BJ (cell line): ENCODE measurements at regions of chr19 and their contacts with region 1.

Region 1: GRCh38 chr19:55146078-55146704 is 2.8 kb downstream of the TNNT1 start:
- DNase-seq: no peak
- H3K4me3 ChIP-seq: peak overlapping the region; percentile 48
- H3K27me3 ChIP-seq: peaks cover 6% of the 10 kb centered on the region
- CTCF ChIP-seq: peak; percentile 89

Region 2: DNA sequence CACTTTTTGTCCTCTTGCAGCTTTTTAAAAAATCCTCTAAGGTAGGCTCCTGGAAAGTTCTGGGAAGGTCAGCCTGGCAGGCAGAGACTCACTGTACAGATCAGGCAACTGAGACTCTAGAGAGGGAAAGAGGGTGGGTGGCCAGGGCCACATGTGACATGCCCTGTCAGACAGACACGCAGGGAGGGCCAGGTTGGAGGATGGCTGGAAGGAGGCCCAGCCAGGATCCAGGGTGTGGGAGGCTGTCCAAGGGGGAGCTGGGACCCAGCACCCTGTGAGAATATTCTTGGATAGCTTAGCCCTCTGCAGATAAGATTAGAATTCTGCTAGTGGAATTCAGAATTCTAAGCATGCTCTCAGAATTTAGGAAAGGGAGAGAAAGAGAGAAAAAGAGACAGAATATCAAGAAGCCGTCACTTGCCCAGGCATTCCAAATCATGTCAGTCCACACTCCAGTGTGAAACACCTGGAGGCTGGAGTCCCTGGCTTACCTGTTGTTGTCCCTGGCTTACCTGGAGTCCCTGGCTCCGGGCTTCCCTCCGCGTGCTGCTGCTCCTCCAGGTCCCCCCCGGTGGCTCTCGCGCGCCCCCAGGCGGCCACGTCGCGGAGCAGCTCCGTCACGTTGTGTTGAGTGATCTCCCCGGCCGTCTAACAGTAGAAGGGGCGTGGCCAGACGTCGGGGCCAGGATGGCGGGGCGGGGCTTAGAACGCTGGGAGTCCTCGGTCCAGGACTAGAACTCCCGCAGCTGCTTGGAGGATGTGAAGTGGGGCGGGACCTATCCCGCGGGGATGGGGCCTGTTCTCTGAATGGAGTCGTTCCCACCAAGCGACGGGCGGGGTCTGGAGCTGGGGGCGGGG is 14.2 kb after region 1 on chr19:
- CTCF ChIA-PET with region 1: interaction called, 43 read pairs
- POLR2A ChIA-PET with region 1: no interaction called
- DNase-seq: no peak
- H3K4me3 ChIP-seq: no peak overlapping the region
- H3K27me3 ChIP-seq: peaks cover 7% of the 10 kb centered on the region; the same call in 1 of the 2 replicates
- CTCF ChIP-seq: peak; percentile 98

Region 3: DNA sequence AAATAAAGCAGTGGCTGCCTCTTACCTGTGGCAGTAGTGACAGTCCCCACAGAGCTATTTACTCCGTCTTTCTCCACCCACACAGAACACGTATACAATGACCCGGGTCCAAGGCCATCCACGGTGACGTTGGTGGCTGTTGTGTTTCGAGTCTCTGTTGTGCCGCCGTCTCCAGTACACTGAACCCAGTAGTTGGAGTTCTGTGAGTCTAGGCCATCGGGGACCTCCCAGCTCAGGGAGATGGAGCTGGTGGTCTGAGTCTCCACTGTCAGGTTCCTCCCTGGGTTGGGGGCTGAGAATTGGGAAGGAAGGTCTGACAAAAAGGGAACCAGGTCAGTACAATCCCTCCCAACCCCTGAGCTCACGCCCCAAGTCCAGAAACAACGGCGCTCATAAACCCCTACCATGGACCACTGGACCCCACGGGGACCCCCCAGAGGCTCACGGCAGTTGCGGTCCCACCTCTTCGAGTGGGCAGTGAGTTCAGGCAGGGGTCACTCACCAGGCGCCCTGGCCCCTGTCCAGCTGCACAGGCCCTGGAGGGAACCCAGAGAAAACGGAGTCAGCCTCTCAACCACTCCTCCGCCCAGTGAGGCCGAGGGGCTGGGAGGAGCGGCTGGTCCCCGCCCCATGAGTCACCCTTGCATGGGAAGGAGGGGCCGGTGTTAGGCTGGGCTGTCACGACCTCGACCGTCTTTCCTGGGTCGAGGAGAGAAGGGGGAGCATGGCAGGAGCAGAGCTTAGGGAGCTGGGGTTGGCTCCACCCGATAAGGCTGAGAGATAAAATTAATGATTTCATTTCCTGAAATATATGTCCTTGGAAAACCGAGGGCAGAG is 60.7 kb after region 1 on chr19:
- CTCF ChIA-PET with region 1: no interaction called
- POLR2A ChIA-PET with region 1: no interaction called
- DNase-seq: peak; percentile 67
- H3K4me3 ChIP-seq: peak overlapping the region; percentile 29
- H3K27me3 ChIP-seq: no peaks in the 10 kb centered on the region
- CTCF ChIP-seq: no peak

Region 4: GRCh38 chr19:55418185-55418584 is 272.0 kb after region 1 on chr19:
- CTCF ChIA-PET with region 1: interaction called, 72 read pairs
- POLR2A ChIA-PET with region 1: no interaction called
- DNase-seq: peak; percentile 37
- H3K4me3 ChIP-seq: no peak overlapping the region
- H3K27me3 ChIP-seq: no peaks in the 10 kb centered on the region
- CTCF ChIP-seq: peak; percentile 81

Region 5: DNA sequence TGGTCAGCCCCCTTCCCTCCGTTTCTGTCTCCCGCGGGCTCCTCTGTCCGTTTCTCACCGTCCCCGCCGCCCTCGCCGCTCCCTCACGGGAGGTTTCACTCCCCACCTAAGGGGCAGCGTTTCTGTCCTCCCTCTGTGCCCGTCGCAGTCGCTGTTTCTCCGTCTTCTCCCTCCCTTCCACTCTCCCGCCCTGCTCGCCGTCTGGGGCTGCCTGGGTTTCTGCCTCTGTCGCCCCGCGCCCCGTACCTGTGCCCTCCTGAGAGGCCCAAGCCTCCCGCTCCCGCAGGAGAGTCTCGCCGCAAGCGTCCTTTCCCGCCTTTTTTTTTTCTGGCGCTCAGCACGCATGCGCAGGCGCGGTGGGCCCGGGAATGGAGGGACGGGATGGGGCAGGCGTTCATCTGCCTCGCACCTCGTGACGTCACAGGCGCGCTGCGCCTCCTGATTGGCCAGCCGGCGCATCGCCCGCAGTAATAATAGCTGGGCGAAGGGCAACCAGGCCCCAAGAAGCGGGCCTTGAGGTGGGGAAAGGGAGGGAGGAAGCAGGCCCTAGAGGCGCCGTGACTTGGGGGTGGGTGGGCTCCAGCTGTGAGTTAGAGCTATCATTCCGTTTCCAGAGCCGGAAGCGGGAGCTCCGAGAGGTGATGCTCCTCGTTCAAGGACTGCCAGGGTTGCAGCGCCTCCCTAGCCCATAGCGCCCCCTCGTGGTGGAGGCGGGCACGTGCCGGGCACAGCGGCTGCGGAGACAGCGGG is 357.5 kb after region 1 on chr19:
- CTCF ChIA-PET with region 1: interaction called, 24 read pairs
- POLR2A ChIA-PET with region 1: no interaction called
- DNase-seq: peak; percentile 31
- H3K4me3 ChIP-seq: peak overlapping the region; percentile 45
- H3K27me3 ChIP-seq: no peaks in the 10 kb centered on the region
- CTCF ChIP-seq: peak; percentile 98